Mammary epithelial cell (primary cell): ENCODE measurements at regions of chr10 and their contacts with region 1.

Region 1: DNA sequence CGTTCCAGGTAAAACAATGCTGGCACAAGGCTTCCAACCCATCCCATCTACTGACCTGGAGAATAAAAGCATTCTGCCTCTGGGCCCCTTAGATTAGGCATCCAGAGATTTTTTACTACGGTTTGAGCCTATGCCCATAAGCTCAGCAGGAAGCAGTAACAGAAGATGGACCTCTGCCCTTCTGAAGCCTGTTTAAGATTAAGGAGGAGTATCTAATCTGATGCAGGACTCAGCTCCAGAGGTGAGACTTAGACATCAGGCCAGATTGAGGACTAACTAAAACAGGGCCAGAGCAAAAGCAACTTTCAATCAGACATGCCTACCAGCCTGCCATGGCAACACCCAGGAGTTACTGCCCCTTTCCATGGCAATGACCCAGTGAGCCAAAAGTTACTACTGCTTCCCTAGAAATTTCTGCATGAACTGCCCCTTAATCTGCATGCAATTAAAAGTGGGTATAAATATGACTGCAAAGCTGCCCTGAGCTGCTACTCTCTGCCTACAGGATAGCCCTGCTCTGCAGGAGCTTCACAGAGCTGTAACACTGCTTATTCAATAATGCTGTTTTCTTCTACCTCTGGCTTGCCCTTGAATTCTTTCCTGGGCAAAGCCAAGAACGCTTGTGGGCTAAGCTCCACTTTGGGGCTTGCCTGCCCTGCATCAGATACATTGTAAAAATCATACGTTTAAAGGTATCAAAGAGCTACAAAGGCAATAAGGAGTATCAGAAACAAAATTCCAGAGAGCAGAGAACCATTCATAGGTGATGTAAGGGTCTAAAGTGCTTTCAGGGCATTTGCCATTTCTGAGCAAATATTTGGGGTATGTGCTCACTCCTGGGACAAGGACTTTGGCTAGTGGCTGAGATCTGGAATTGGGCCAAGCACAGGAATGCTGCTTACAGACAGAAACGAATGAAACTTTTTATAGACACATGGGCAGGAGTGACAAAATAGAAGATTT is 25.0 kb upstream of the CNNM1 start:
- DNase-seq: no peak
- H3K4me3 ChIP-seq: no peak overlapping the region
- H3K27ac ChIP-seq: no peak overlapping the region
- H3K4me1 ChIP-seq: no peaks in the 10 kb centered on the region
- H3K27me3 ChIP-seq: no peaks in the 10 kb centered on the region
- CTCF ChIP-seq: no peak

Region 2: GRCh38 chr10:99337311-99337811 is 33.2 kb after region 1 on chr10:
- CTCF ChIA-PET with region 1: no interaction called
- dilution Hi-C with region 1: loop called (anchors 5 kb)
- in situ Hi-C with region 1: no loop called
- intact Hi-C with region 1: no loop called
- DNase-seq: peak; percentile 20
- H3K4me3 ChIP-seq: no peak overlapping the region
- H3K27ac ChIP-seq: no peak overlapping the region
- H3K4me1 ChIP-seq: peaks cover 2% of the 10 kb centered on the region
- H3K27me3 ChIP-seq: no peaks in the 10 kb centered on the region
- CTCF ChIP-seq: no peak

Region 3: DNA sequence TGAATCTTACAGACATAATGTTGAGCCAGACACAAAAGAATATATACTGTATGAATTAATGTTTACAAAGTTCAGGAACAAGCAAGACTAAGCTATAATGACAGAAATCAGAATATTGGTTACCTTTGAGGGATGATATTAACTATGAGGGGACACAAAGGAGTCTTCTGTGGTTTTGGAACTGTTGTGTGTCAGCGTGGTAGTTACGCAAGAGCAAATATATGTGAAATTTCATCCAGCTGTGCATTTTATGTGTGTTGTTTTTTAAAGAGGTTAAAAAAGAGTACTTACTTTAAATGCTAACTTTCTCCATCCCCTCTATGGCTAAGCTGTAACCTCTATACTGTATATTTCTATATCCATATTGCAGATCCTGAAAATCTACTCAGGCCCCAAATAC is 301.2 kb after region 1 on chr10:
- CTCF ChIA-PET with region 1: no interaction called
- dilution Hi-C with region 1: no loop called
- in situ Hi-C with region 1: no loop called
- intact Hi-C with region 1: no loop called
- DNase-seq: no peak
- H3K4me3 ChIP-seq: no peak overlapping the region
- H3K27ac ChIP-seq: no peak overlapping the region
- H3K4me1 ChIP-seq: no peaks in the 10 kb centered on the region
- H3K27me3 ChIP-seq: no peaks in the 10 kb centered on the region
- CTCF ChIP-seq: no peak